Caki2 (cell line): ENCODE measurements at regions of chr5 and their contacts with region 1.

Region 1: GRCh38 chr5:39547553-39548154 is 122.9 kb upstream of the DAB2 start:
- DNase-seq: peak; percentile 49

Region 2: GRCh38 chr5:39194466-39195136 is 353.1 kb before region 1 on chr5:
- in situ Hi-C with region 1: no loop called
- DNase-seq: no peak

Region 3: DNA sequence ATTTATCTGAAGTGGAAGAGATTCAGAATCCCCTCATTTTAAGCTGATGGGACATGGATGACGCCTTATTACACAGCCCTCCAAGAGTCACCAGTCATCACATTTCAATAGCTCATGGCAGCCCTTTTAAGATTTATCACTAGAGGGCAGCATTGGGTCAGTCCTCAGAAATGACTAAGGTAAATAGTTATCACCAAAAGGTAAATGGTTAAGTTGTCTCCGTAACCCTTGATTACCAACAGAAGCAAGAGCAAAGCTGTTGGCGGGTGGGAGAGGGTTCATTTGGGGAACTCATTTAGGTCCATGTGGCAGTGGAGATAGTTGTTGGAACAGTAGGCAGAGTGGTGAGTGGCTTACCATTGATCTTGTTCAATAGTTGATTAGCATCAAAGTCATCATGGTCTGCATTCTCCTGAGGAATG is 171.3 kb before region 1 on chr5:
- in situ Hi-C with region 1: loop called (anchors 25 kb)
- DNase-seq: peak; percentile 54